ENCODE measurements at regions of chr11 and their contacts with region 1.

Region 1: DNA sequence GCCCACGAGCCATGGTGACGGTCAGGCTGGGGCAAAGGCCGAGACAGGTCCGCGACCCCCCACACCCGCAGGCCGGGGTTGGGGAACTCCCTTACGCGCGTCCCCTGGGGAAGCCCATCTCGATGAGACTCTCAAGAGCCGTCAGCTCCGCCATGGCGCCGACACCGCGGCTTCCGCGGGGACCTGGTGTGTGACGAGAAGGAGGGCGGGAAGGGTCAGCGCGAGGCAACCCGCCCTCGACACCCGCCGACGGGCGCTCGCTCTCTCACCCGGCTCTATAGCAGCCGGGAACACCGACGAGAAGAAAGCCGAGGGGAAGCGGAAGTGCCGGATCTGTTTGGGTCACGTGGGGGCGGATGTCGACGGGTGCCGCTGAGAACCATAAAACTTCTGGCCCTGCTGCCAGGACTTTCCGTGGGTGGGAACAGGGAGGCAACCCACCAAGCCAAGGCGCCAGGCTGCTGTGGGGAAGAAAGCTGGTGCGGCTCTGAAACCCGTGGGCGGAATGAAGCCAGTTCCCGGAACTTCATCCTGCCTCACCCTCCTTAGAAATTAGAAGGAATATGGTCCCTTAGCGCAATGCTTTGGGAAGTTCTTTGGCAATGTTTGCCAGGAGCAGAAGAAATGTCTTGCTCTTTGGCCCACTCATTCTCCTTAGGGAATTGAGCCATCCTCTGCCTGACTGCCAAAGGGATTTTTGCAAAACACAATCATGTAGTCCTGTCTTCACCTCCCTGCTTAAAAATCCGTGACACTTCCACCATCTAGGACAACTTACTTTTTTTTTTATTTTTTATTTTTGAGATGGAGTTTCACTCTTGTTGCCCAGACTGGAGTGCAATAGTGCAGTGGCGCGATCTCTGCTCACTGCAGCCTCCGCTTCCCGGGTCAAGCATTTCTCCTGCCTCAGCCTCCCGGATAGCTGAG is at the start of gene UBXN1:
- DNase-seq: peak; percentile 95
- ATAC-seq: peak; percentile 89
- total RNA-seq, gene UBXN1: 88.9 TPM

Region 2: GRCh38 chr11:62400760-62401159 is 278.3 kb before region 1 on chr11:
- intact Hi-C with region 1: loop called (anchors 5 kb)
- DNase-seq: peak; percentile 90
- ATAC-seq: peak; percentile 86

Region 3: DNA sequence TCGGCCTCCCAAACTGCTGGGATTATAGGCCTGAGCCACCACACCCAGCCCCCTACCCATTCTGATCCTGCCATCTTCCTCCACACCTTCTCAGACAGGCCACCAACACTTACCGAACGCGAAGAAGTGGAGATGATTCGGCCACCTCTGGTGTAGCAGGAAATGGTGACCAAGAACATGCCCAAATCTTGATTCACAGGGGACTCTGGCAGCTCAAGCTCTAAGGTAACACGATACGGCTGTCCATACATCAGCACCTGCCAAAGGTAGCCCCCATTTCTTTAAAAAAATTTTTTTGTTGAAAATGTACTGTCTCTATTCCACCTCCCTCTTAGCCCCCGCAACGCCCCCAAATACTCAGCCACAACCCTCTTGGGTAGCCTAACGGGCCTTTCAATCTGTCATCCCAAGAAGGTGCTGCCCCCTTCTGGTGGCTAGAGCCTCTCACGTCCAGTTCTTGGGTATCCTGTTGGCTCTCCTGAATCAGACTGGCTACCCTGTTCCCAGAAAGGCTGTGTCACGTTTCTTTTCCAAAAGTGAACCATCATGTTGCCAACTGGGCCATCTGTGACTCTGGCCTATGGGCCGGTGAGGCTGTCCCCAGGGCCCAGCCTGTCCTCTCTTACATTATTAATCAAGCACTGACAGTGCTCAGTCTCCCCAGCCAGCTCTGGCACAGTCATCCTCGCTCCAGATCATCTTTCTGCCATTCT is 15.6 kb after region 1 on chr11:
- intact Hi-C with region 1: loop called (anchors 1 kb)
- DNase-seq: peak; percentile 86
- ATAC-seq: peak; percentile 78